PC-9 (cell line): ENCODE measurements at regions of chr17 and their contacts with region 1.

Region 1: GRCh38 chr17:42517516-42517915 is 18.5 kb upstream of the NAGLU start:
- DNase-seq: peak; percentile 60 to 78
- H3K4me3 ChIP-seq: no peak overlapping the region
- H3K27ac ChIP-seq: peak overlapping the region; percentile 89
- H3K4me1 ChIP-seq: peaks cover 53% of the 10 kb centered on the region
- H3K27me3 ChIP-seq: no peaks in the 10 kb centered on the region
- CTCF ChIP-seq: peak; percentile 95

Region 2: DNA sequence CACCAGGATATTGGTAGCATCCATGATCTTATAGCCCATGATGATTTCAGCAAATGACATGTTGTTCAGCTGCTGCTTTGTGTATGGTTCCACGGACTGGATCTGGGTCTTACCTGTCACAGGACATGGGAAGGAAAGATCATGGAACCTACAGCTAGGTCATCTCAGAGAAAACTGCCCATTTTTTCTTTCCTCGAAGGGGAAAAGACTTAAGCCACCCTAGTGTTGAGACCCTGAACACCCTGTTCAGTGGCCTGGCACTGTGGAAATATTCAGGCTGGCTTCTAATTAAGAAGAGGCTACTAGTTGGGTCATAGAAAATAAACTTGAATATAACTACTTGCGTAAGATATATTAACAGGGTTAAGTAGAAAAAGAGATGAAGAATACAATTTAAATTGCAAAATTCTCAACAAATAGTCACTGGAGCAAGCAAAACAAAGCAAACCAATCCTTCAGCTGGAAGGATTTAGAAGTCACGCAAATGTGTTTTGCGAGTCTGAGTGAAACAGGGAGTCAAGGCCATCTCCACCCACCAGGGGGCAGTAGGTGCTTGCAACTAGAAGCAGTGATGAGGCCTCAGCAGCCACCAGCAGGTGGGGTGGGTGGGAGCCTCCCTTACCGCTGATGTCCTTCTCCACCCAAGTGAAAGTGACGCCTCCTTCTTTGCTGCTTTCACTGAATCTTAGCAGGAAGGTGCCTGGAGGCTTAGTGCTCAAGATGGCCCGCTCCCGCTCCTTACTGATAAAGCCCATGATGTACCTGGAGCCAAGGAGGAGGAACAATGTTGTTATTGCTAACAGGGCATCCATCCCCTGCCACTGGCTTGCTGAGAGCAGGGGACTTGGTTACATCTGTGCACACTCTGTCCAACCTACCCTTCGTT is 194.9 kb before region 1 on chr17:
- CTCF ChIA-PET with region 1: interaction called, 4 read pairs
- POLR2A ChIA-PET with region 1: interaction called, 5 read pairs
- intact Hi-C with region 1: loop called (anchors 2 kb)
- DNase-seq: peak; percentile 84 to 87
- H3K4me3 ChIP-seq: no peak overlapping the region
- H3K27ac ChIP-seq: no peak overlapping the region
- H3K4me1 ChIP-seq: peaks cover 37% of the 10 kb centered on the region
- H3K27me3 ChIP-seq: no peaks in the 10 kb centered on the region
- CTCF ChIP-seq: peak; percentile 98

Region 3: DNA sequence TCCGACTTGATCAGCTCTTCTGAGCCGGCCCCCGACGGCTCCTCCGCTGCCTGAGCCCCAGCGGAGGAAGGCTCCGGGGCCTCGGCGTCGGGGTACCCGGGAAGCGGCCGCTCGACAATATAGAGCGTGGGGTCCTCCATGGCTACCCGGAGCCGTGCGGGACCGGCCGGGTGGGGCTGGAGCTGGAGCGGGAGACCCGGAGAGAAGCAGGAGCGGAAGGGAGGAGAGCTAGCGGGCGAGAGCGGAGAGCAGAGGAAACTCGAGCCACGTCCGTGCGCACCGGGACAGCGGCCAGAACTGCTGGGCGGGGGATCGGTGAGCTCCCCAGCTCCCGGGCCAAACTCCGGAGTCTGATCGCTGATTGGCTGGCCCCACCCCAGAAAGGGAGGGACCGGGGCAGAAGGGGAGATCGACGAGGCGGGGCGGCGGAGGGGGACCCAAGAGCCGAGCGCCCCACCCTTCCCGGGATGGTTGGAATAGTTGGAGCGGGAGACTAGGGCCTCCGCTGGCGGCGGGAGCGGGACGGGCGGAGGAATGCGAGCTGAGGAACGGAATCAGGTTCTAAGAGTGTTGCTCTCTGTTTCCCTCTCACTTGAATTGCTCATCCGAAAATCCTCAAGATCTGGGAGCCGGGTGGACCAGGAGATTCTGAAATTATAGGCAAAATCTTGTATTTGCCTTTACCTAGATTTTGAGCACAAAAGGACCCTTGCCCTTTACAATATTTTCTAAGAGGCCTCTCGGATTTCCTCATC is 94.4 kb before region 1 on chr17 and contains the start of gene CAVIN1:
- CTCF ChIA-PET with region 1: interaction called, 5 read pairs
- POLR2A ChIA-PET with region 1: interaction called, 11 read pairs
- intact Hi-C with region 1: loop called (anchors 1 kb)
- DNase-seq: peak; percentile 82 to 97
- H3K4me3 ChIP-seq: peak within 1 kb of the TSS; percentile 76
- H3K27ac ChIP-seq: 0 out of 2 replicates have a peak within 1 kb of the TSS, but pooled peaks have one; percentile 12
- H3K4me1 ChIP-seq: peaks cover 43% of the 10 kb centered on the region
- H3K27me3 ChIP-seq: no peaks in the 10 kb centered on the region
- CTCF ChIP-seq: no peak
- total RNA-seq, gene CAVIN1: 154 and 170 TPM in 2 replicates

Region 4: GRCh38 chr17:42459256-42459800 is 58.2 kb before region 1 on chr17:
- CTCF ChIA-PET with region 1: no interaction called
- POLR2A ChIA-PET with region 1: no interaction called
- intact Hi-C with region 1: loop called (anchors 5 kb)
- DNase-seq: peak; percentile 6 to 64
- H3K4me3 ChIP-seq: peak overlapping the region; percentile 77
- H3K27ac ChIP-seq: peak overlapping the region; percentile 78
- H3K4me1 ChIP-seq: peaks cover 41% of the 10 kb centered on the region
- H3K27me3 ChIP-seq: no peaks in the 10 kb centered on the region
- CTCF ChIP-seq: peak; percentile 44; the same call in 1 of the 2 replicates

Region 5: DNA sequence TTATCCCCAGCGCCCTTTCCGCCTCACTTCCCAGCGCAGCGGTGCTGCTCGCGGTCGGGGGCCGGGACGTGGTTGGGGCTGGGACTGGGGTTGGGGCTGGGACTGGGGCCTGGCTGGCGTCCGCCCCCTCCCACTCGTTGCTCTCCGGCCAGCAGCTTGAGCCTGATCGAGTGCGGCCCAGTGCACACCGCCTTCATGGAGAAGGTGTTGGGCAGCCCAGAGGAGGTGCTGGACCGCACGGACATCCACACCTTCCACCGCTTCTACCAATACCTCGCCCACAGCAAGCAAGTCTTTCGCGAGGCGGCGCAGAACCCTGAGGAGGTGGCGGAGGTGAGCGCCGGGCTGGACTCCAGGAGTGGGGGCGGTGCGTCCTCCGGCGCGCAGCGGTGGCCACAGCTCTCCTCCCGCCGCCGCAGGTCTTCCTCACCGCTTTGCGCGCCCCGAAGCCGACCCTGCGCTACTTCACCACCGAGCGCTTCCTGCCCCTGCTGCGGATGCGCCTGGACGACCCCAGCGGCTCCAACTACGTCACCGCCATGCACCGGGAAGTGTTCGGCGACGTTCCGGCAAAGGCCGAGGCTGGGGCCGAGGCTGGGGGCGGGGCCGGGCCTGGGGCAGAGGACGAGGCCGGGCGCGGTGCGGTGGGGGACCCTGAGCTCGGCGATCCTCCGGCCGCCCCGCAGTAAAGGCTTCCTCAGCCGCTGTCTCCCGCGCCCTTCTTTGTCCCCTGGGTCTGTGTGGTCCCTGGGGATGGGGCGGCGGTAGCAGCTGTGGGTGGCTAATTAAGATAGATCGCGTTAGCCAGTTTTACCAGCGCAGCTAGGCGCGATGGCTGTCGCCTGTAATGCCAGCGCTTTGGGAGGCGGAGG is 37.0 kb after region 1 on chr17:
- CTCF ChIA-PET with region 1: no interaction called
- POLR2A ChIA-PET with region 1: no interaction called
- intact Hi-C with region 1: no loop called
- DNase-seq: peak; percentile 59 to 81
- H3K4me3 ChIP-seq: peak overlapping the region; percentile 99
- H3K27ac ChIP-seq: peak overlapping the region; percentile 58
- H3K4me1 ChIP-seq: no peaks in the 10 kb centered on the region
- H3K27me3 ChIP-seq: no peaks in the 10 kb centered on the region
- CTCF ChIP-seq: no peak